Posterior vena cava (tissue), 2 donors: ENCODE measurements at regions of chrX and their contacts with region 1.

Region 1: DNA sequence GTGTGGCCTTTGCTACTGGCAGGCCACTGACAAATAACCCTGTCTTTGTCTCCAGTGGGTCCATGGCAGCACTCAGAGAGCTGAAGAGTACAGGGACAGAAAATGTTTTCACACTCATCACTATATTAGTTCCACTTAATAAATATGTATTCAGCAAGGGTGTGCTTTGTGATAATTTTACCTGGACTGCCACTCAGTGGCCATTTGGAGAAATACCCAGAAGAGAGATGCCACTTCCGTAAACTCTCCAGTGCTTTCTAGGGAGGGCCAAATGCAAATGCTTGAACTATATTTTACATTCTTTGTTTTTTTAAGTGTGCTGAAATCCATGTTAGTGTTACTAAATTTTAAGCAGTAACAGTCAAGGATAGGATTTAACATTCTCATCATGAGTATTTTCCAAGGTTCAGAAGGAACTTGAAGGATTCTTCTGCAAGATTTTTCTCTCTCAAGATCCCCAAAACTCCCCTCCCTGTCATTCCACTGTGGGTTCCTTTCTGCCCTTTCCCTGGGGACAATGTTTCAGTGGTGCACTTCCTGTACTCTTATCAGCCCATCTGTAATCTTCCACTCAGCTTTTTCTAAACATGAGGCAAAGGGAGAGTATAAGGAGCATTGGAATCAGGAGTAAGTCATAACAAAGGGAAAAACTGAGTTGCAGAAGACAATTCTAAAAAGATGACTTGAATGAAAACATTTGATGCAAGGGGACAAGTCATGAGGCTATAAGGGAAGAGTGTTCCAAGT is 46.0 kb downstream of the TFDP3 start:
- DNase-seq: no peak

Region 2: DNA sequence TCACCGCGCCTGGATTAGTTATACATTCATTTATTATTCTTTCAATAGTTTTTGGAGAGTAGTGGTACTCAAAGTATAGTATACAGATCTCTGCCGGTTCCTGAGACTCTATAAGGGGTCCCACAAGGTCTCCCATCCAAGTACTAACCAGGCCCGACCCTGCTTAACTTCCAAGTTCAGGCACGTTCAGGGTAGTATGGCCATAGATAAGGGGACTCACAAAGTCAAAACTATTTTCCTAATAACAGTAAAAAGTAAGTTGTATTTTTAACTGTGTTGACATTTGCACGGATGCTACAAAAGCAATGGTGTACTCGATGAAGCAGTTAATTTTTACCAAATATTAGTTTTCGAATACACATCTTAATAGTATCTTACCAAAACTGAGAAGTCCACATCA is 1233.4 kb before region 1 on chrX:
- intact Hi-C with region 1: loop called in 1 of 2 experiments (anchors 5 kb)
- DNase-seq: no peak

Region 3: DNA sequence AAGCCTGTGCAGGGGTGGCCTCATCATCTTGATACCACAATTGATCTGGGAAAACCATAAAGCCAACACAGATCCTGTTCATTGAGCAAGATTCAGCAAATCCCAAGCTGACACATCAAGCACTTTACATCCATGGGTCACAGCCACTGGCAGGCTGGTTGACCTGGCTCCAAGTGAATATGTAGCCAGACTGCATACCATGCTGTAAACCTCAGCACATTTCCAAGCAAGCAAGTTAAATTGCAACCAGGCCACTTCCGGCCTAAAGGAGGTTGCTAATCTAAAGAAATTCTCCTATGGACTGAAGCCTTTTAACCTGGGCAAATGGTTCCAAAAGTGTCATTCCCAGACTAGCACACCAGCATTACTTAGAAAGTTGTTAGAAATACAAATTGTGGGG is 20.8 kb before region 1 on chrX:
- intact Hi-C with region 1: no loop called
- DNase-seq: no peak

Region 4: DNA sequence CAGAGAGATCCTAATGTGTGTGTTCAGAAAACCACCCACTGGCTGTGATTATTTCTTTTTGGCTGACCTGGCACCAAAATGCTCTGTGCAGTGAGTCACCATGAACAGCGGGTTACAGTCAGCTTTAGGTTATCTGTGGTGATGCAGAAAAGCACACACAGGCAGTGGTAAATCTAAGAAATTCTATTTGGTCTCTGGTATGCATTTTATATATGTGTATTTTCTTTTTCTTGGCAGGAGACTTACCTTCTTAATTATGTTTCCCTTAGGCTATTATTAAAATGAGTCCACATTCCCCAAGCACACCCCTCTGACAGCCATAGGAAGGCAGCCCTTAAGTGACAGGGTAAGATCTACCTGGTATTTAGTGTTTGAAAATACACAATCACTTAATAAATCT is 125.2 kb after region 1 on chrX:
- intact Hi-C with region 1: no loop called
- DNase-seq: no peak

Region 5: GRCh38 chrX:133574716-133575115 is 402.6 kb after region 1 on chrX:
- intact Hi-C with region 1: no loop called
- DNase-seq: no peak